ENCODE measurements at regions of chr6 and their contacts with region 1.

Region 1: GRCh38 chr6:11496152-11497060 is 41.1 kb upstream of the TMEM170B start:
- DNase-seq: peak; percentile 67 to 80 (median 70)
- ATAC-seq: peak; percentile 96
- H3K4me3 ChIP-seq: no peak overlapping the region
- H3K27ac ChIP-seq: no peak overlapping the region
- H3K4me1 ChIP-seq: no peaks in the 10 kb centered on the region
- H3K27me3 ChIP-seq: no peaks in the 10 kb centered on the region
- CTCF ChIP-seq: peak; percentile 62 to 98 (median 96)
- POLR2A ChIP-seq: no peak

Region 2: GRCh38 chr6:11146117-11146826 is 350.1 kb before region 1 on chr6:
- intact Hi-C with region 1: loop called (anchors 5 kb)
- DNase-seq: no peak
- ATAC-seq: no peak
- H3K4me3 ChIP-seq: no peak overlapping the region
- H3K27ac ChIP-seq: no peak overlapping the region
- H3K4me1 ChIP-seq: no peaks in the 10 kb centered on the region
- H3K27me3 ChIP-seq: no peaks in the 10 kb centered on the region
- CTCF ChIP-seq: no peak
- POLR2A ChIP-seq: no peak

Region 3: DNA sequence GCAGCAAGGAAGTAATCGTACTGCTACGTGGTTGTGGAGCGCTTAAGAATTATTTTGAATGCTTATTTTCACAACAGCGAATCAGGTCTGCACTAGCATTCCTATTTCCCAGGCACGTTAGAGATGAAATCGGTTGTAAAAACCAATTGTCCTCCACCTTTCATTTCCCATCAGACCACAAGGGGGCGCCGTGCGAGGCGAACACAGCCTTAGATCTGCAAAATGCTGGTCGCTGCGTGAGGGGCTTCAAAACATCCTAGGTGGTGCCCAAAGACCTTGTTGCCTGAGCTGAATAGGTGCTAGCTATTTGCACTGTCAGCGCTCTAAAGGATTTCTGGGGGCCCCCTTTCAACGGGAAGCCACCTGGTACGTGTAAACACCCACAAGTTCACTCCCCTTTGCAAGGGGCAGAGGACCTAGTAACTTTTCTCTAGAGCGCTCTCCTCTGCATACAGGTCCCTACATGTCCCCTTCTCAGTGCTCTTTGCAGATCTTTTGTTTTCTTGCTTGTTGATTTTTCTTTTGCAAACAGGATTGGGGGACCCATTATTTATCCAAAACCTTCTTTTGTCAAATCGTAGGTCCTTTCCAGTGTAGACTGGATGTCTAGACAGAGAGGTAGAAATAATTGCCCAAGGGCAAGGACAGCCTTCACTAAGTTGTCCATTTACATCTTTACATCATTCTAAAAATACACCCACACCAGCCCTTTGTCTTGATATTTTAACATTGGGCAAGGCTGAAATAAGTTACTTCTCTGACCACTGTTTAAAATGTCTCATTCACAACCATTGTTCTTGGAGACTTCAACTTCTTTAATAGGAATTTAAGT is 323.7 kb before region 1 on chr6:
- intact Hi-C with region 1: loop called (anchors 10 kb)
- DNase-seq: peak; percentile 63 to 77 (median 68)
- ATAC-seq: peak; percentile 38
- H3K4me3 ChIP-seq: no peak overlapping the region
- H3K27ac ChIP-seq: no peak overlapping the region
- H3K4me1 ChIP-seq: no peaks in the 10 kb centered on the region
- H3K27me3 ChIP-seq: no peaks in the 10 kb centered on the region
- CTCF ChIP-seq: peak; percentile 72 to 93 (median 75)
- POLR2A ChIP-seq: no peak

Region 4: DNA sequence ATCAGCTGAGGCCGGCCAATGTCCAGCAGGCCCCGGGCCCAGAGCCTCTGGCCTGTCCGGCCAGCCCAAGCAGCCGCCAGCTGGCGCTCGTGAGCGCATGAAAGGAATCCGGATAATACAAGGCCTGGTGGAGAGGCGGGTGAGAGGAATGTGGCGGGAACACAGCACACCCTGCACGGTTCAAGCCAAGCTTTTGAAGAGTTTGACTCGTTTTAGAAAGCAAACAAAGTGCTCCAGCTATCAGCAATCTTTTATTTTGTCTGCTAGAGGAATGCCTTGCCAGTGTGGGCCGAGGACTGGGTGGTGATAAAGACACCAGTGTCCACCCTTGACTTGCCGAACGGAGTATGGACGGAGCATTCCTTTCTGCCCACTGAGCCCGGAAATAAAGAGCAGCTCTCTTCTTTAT is 254.6 kb before region 1 on chr6:
- intact Hi-C with region 1: loop called (anchors 10 kb)
- DNase-seq: peak; percentile 80 to 87 (median 83)
- ATAC-seq: peak; percentile 95
- H3K4me3 ChIP-seq: no peak overlapping the region
- H3K27ac ChIP-seq: peak overlapping the region in 1 of 4 donors; percentile 5
- H3K4me1 ChIP-seq: peaks cover 10% of the 10 kb centered on the region
- H3K27me3 ChIP-seq: no peaks in the 10 kb centered on the region
- CTCF ChIP-seq: peak; percentile 79 to 96 (median 88)
- POLR2A ChIP-seq: no peak

Measured in body of pancreas (tissue), 4 donors.